ENCODE measurements at regions of chr5 and their contacts with region 1.

Region 1: GRCh38 chr5:172697123-172698121 is 56.4 kb downstream of the NEURL1B start:
- DNase-seq: peak; percentile 70
- H3K4me3 ChIP-seq: peak overlapping the region; percentile 42 to 65 (median 62)
- H3K27ac ChIP-seq: no peak overlapping the region
- H3K4me1 ChIP-seq: peaks cover 5% of the 10 kb centered on the region
- H3K27me3 ChIP-seq: peaks cover 2% of the 10 kb centered on the region
- CTCF ChIP-seq: peak; percentile 80 to 88

Region 2: DNA sequence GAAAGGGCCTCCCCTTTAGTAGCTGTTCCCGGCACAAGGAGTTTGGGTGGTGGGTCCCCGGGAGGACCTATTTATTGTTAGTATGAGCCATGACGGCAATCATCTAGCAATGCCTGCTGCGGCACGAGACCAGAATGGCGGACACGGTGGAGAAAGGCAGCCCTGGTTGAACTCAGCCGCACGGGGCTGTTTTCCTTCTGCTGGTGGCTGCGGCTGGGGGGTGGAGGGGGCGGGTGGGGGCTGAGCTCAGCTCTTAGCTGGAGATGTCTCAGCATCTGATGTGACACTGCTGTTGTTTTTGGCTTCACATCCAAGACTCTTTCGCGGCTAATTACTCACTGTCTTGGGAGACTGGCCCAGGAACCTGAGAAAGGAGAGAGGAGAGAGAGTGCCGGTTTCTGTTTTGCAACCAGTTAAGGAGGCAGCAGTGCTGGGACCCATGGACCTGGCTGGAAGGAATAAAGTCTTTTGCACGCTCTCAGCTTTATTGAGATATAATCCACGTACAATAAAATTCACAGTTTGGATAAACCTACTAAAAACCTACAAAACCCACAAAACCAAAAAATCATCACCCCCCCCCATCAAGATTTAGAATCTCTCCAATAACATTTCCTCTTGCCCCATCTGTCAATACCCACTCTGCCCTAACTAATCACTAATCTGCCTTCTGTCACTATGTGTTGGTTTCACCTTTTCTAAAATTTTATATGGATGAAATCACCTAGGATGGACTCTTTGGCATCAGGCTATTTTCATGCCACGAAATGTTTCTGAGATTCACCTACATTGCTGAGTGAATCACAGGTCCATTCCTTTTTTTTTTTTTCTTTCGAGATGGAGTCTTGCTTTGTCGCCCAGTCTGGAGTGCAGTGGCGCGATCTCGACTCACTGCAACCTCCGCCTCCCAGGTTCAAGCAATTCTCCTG is 138.2 kb before region 1 on chr5:
- CTCF ChIA-PET with region 1: no interaction called
- dilution Hi-C with region 1: no loop called
- in situ Hi-C with region 1: no loop called
- intact Hi-C with region 1: loop called (anchors 1 kb)
- DNase-seq: peak; percentile 98
- H3K4me3 ChIP-seq: peak overlapping the region in 2 of 3 experiments; percentile 17 to 28
- H3K27ac ChIP-seq: peak overlapping the region; percentile 51
- H3K4me1 ChIP-seq: peaks cover 25% of the 10 kb centered on the region
- H3K27me3 ChIP-seq: peaks cover 2% of the 10 kb centered on the region
- CTCF ChIP-seq: no peak

Region 3: DNA sequence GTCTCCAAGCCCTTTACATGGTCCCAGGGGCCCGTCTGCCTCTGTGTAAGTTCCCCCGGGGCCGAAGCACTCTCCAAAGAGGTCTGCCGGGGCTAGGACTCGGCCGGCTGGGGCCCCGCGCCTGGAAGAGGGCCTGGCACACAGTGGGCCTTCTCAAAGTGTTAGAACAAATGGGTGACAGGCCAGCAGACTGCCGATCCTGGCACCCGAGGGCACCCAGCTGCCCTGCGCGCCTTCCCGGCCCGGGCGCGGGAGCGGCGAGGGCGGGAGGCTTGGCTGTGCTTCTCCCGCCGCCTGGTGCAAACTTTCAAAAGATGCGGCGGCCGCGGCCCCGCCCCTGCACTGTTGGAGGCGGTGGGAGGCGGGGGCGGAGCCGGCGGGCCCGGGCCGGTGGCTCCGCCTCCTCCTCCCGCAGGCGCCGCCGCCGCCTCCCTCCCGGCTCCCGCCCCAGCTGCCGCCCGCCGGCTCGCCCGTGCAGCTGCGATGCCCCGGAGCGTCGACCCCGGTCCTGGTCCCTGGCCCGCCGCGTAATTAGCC is 56.5 kb before region 1 on chr5 and contains the start of gene NEURL1B:
- CTCF ChIA-PET with region 1: no interaction called
- dilution Hi-C with region 1: loop called (anchors 5 kb)
- in situ Hi-C with region 1: no loop called
- intact Hi-C with region 1: no loop called
- DNase-seq: peak; percentile 66
- H3K4me3 ChIP-seq: peak within 1 kb of the TSS; percentile 45 to 62 (median 57)
- H3K27ac ChIP-seq: peak within 1 kb of the TSS; percentile 8
- H3K4me1 ChIP-seq: peaks cover 27% of the 10 kb centered on the region
- H3K27me3 ChIP-seq: no peaks in the 10 kb centered on the region
- CTCF ChIP-seq: peak in 1 of 2 donors; percentile 19
- total RNA-seq, gene NEURL1B: 0.50 to 2.9 TPM

Region 4: DNA sequence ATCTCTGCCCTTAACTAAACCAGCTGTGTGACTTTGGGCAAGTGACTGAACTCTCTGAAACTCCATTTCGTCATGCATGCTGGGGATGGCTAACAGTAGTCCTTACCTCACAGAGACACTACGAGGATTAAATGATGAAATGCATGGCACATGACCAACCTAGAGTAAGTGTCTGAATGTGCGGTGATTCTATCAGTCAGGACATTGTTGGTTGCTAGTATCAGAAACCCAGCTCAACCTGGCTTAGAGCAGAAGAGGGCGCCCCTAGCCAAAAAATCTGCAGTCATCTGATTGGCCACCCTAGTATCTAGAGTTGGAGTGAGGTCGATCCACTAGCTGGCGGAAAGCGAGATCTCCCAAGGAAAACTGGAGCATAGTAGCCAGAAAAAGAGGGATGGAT is 31.2 kb before region 1 on chr5:
- CTCF ChIA-PET with region 1: no interaction called
- dilution Hi-C with region 1: no loop called
- in situ Hi-C with region 1: no loop called
- intact Hi-C with region 1: loop called (anchors 2 kb)
- DNase-seq: no peak
- H3K4me3 ChIP-seq: no peak overlapping the region
- H3K27ac ChIP-seq: no peak overlapping the region
- H3K4me1 ChIP-seq: no peaks in the 10 kb centered on the region
- H3K27me3 ChIP-seq: no peaks in the 10 kb centered on the region
- CTCF ChIP-seq: no peak

Region 5: DNA sequence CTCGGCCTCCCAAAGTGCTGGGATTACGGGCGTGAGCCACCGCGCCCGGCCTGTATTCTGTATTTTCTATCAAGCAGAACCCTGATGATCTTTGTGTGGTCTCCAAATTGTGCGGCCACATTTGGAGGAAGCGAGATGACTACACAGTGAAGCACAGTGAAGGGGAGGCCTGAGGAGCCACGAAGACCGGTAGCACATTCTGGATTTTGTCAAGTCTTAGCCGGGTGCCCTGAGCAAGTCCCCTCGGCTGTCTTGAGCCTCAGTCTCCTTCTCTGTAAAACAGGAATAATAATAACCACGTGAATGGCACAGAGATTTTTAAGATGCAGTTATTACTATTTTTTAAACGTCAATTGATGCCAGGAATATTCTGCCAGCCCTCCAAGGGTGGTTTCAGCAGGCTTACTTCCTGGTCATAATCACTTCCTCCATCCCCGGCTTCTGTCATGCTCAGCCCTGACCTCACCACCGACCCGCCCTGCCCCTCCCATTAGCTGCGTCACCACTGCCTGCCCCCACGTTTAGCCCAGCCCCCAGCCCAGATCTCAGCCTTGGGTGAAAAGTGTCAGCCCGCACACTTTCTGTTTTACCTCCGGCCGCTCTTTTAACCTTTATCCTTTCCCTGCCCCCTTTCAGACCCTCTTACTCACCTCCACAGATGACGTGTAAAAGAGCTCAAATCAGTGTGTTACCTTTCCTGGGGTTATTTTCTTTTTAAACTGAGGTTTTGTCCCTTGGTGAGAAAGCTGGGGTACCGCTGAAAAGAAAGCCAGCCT is 109.7 kb after region 1 on chr5:
- CTCF ChIA-PET with region 1: no interaction called
- dilution Hi-C with region 1: no loop called
- in situ Hi-C with region 1: no loop called
- intact Hi-C with region 1: no loop called
- DNase-seq: peak; percentile 40
- H3K4me3 ChIP-seq: no peak overlapping the region
- H3K27ac ChIP-seq: no peak overlapping the region
- H3K4me1 ChIP-seq: peaks cover 6% of the 10 kb centered on the region
- H3K27me3 ChIP-seq: no peaks in the 10 kb centered on the region
- CTCF ChIP-seq: no peak